OCI-LY7 (cell line): ENCODE measurements at regions of chr22 and their contacts with region 1.

Region 1: GRCh38 chr22:31661851-31662656 is at the start of gene PISD:
- DNase-seq: peak; percentile 98
- H3K4me3 ChIP-seq: peak within 1 kb of the TSS; percentile 95
- H3K27ac ChIP-seq: peak within 1 kb of the TSS; percentile 8
- H3K4me1 ChIP-seq: peaks cover 18% of the 10 kb centered on the region
- CTCF ChIP-seq: no peak
- total RNA-seq, gene PISD: 21.5 and 25.7 TPM in 2 replicates

Region 2: GRCh38 chr22:31465307-31465706 is 196.7 kb before region 1 on chr22:
- CTCF ChIA-PET with region 1: no interaction called
- POLR2A ChIA-PET with region 1: no interaction called
- intact Hi-C with region 1: no loop called
- DNase-seq: no peak
- H3K4me3 ChIP-seq: no peak overlapping the region
- H3K27ac ChIP-seq: no peak overlapping the region
- H3K4me1 ChIP-seq: no peaks in the 10 kb centered on the region
- CTCF ChIP-seq: no peak

Region 3: DNA sequence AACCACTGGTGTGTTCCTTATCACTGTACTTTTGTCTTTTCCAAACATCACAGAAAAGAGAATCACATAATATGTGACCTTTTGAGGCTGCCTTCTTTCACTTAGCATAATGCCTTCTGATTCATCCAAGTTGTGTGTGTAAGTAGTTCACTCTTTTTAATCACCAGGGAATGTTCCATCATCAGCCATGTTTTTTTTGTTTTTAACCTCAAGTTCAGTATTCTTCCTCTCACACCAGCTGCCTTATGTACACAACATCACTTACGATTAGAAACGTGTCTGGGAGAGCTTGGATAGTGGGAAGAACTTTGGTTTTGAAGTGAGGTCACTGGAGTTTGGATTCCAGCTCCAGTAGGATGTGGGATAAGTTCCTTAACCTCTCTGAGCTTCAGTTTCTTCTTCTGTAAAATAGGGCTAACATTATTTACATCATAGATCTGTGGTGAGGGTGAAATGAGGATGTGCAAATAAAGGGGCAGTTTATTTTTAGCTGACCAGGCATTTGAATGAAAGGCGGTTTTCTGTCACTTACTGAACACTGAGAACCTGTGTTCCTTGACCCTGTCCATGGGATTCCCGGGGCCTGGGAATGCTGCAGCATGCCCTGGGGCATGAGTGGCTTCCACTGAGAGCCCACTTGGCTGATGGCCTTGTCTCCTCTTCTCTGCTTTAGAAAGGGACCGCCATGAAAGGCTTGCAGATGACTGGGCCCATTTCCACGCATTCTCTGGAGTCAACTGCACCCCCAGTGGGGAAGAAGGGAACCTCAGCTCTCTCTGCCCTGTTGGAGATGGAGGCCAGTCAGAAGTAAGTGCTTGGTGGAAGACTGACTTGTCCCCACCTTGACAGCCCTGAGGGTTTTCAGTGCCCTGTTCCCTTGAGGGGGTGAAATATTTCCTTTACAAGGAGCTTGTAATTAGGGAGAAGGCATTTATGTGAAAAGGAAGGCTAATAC is 184.4 kb after region 1 on chr22:
- CTCF ChIA-PET with region 1: no interaction called
- POLR2A ChIA-PET with region 1: no interaction called
- intact Hi-C with region 1: loop called (anchors 10 kb)
- DNase-seq: peak; percentile 43
- H3K4me3 ChIP-seq: no peak overlapping the region
- H3K27ac ChIP-seq: peak overlapping the region; percentile 22
- H3K4me1 ChIP-seq: peaks cover 13% of the 10 kb centered on the region
- CTCF ChIP-seq: peak; percentile 69

Region 4: DNA sequence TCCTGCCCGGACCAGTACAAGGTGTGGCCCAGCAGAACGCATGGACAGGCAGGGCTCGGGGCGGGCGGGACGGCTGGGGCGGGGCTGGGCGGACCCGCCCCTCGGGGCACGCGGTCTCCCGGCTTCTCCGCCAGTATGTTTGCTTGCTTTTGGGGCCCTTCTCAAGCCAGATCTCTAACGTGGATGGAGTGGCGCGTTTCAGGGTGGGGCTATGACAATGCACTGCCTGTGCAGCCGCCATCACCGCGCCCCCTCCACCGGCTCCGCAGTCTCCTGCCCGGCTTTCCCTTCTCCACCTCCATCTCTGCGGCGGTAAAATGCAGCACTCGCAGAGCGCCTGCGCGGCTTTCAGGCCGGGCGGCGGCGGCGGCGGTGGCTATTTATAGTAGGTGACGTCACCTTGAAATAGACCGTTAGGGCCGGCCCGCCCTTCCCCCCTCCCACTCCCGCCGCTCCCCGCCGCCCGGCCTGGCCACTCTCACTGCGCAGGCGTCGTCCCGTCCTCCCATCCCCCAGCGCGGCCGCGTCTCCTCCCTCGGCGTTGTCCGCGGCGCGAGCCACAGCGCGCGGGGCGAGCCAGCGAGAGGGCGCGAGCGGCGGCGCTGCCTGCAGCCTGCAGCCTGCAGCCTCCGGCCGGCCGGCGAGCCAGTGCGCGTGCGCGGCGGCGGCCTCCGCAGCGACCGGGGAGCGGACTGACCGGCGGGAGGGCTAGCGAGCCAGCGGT is 282.1 kb after region 1 on chr22 and contains the start of gene YWHAH:
- CTCF ChIA-PET with region 1: no interaction called
- POLR2A ChIA-PET with region 1: interaction called, 3 read pairs
- intact Hi-C with region 1: loop called (anchors 1 kb)
- DNase-seq: peak; percentile 94
- H3K4me3 ChIP-seq: peak within 1 kb of the TSS; percentile 99
- H3K27ac ChIP-seq: peak within 1 kb of the TSS; percentile 87
- H3K4me1 ChIP-seq: peaks cover 37% of the 10 kb centered on the region
- CTCF ChIP-seq: no peak
- total RNA-seq, gene YWHAH: 103 and 113 TPM in 2 replicates

Region 5: DNA sequence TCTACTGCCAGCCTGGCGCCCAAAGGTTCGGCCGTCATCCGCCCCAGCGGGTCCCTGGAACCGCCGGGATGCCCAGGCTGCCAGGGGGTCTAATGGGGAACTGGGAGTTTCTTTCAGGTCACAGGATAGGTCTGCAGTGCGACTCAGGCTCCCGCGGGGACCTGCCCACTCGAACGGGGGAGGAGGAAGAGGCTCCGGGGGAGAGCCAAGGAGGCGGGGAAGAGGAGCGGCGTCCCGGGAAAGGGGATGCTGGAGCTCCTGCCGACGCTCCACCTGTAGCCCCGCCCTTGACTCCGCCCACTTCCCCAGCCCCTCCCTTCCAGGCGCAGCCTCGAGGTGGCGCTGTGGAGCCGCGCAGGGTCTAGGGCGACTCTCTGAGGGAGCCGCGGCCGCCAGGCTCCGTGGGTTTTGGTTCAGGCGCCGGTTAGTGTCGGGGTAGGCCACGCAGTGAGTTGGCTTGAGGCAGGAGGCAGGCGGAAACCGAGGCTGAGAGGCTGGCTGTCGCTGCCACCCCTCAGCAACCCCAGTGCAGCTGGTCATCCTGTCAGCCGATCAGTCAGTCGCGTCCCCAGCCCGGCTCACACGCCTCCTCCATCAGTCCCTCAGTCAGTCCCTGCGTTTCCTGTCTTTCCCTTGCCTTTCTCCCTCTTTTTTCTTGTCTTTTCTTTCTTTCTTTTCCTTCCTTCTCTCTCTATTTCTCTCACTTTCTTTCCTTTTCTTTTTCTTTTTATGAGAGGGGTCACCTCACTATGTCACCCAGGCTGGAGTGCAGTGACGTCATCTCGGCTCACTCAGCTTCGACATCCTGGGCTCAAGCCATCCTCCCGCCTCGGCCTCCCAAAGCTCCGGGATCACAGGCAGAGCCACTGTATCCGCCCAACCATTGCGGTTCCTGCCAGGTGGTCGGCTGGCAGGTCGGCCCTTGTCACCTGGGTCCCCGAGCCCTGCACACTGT is 308.7 kb after region 1 on chr22:
- CTCF ChIA-PET with region 1: interaction called, 4 read pairs
- POLR2A ChIA-PET with region 1: interaction called, 4 read pairs
- intact Hi-C with region 1: loop called (anchors 1 kb)
- DNase-seq: peak; percentile 63
- H3K4me3 ChIP-seq: peak overlapping the region; percentile 65
- H3K27ac ChIP-seq: no peak overlapping the region
- H3K4me1 ChIP-seq: peaks cover 15% of the 10 kb centered on the region
- CTCF ChIP-seq: peak; percentile 64

Region 6: DNA sequence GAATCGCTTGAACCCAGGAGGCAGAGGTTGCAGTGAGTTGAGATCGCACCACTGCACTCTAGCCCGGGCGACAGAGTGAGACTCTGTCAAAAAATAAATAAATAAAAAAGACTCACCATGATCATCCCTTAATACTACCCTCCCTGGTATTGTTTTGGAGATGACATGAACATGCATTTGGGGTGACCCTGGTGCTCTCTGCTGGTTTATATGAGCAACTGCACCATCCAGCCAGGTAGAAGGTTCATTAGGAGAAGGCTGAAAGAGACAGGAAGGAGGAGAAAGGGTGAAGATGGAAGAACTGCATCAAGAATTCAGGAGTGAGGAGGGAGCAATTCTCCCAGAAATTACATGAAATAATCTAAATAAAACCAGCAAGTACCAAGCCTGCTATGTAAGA is 418.9 kb after region 1 on chr22:
- CTCF ChIA-PET with region 1: no interaction called
- POLR2A ChIA-PET with region 1: no interaction called
- intact Hi-C with region 1: no loop called
- DNase-seq: peak; percentile 49
- H3K4me3 ChIP-seq: no peak overlapping the region
- H3K27ac ChIP-seq: no peak overlapping the region
- H3K4me1 ChIP-seq: no peaks in the 10 kb centered on the region
- CTCF ChIP-seq: peak; percentile 78